Heart right ventricle (tissue), 16 donors: ENCODE measurements at regions of chr14 and their contacts with region 1.

Region 1: DNA sequence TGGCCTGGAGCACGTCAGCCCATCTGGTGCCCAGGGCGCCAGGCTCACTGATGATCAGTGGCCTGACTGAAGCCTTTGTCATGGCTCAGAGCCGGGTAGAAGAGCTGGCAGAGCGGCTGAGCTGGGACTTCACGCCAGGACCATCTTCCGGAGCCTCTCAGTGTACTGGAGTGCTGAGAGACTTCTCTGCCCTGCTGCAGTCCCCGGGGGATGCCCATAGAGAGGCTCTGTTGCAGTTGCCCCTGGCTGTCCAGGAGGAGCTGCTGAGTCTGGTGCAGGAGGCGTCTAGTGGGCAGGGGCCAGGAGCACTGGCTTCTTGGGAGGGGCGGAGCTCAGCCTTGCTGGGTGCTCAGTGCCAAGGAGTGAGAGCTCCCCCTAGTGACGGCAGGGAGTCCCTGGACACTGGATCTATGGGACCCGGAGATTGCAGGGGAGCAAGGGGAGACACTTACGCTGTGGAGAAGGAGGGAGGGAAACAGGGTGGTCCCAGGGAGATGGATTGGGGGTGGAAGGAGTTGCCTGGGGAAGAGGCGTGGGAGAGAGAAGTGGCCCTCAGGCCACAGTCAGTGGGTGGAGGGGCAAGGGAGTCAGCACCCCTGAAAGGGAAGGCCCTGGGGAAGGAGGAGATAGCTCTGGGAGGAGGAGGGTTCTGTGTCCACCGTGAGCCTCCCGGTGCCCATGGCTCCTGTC is 2.0 kb downstream of the KHNYN start:
- DNase-seq: peak; percentile 91 to 92
- ATAC-seq: peak; percentile 56 to 83 (median 74)
- H3K4me3 ChIP-seq: peak overlapping the region in 9 of 10 donors; percentile 74 to 91 (median 79)
- H3K27ac ChIP-seq: peak overlapping the region in 9 of 10 donors; percentile 91 to 99 (median 97)
- H3K4me1 ChIP-seq: peaks cover 12 to 56% (median 43%) of the 10 kb centered on the region in 9 donors
- H3K27me3 ChIP-seq: no peaks in the 10 kb centered on the region
- CTCF ChIP-seq: peak; percentile 90 to 96 (median 92)

Region 2: DNA sequence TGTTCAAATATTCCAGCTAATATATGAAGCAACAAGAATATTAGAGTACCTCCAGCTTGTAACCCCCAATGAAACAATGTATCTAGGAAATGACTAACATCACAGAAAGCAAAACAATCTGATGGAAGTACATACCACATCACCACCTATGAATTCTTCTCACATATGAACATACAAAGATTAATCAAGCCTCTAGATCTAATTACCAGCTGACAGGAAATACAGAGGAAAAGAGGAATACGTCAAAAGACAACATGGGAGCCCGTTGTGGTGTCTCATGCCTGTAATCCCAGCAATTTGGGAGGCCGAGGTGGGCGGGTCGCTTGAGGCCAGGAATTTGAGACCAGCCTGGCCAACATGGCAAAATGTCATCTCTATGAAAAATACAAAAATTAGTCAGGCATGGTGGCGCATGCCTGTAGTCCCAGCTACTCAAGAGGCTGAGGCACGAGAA is 207.1 kb before region 1 on chr14:
- intact Hi-C with region 1: loop called in 1 of 10 experiments (anchors 5 kb)
- DNase-seq: no peak
- ATAC-seq: peak in 4 of 8 donors; percentile 23 to 77 (median 71)
- H3K4me3 ChIP-seq: no peak overlapping the region
- H3K27ac ChIP-seq: peak overlapping the region in 6 of 10 donors; percentile 17 to 67 (median 44)
- H3K4me1 ChIP-seq: peaks cover 0 to 18% (median 4%) of the 10 kb centered on the region in 9 donors
- H3K27me3 ChIP-seq: no peaks in the 10 kb centered on the region
- CTCF ChIP-seq: no peak

Region 3: DNA sequence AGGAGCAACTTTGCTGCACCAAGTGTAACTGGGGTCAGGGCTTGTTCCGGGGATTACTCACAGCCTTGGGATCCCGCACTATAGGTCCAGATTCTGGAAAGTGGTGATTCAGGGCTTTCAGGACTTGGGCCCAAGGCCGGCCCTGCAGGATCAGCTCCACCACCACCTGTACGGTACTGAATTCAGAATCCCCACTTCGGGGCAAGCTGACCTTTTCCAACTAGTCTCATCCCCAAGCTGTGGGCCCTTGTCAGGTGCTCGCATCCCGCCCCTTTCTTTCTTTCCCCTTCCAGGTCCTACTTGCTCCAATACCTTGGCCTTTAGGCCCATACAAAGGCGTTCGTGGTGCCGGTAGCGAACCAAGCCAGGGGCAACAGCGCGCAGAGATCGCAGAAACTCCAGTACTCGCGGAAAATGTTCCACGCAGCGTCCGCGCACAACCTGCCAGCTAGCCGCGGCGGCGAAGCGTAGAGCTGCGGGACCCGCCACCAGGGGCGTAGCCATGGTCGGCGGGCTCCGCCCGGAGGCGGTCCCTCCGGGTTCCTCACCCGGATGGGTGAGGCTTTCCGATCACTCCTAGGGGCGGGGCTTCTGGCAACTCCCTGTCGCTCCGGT is 189.8 kb before region 1 on chr14:
- intact Hi-C with region 1: loop called in 5 of 10 experiments (anchors 10 kb)
- DNase-seq: peak; percentile 93
- ATAC-seq: peak; percentile 91 to 96 (median 94)
- H3K4me3 ChIP-seq: peak overlapping the region; percentile 59 to 90 (median 74)
- H3K27ac ChIP-seq: peak overlapping the region; percentile 97 to 99 (median 98)
- H3K4me1 ChIP-seq: peaks cover 10 to 60% (median 48%) of the 10 kb centered on the region in 9 donors
- H3K27me3 ChIP-seq: no peaks in the 10 kb centered on the region
- CTCF ChIP-seq: peak; percentile 35 to 75 (median 69)

Region 4: GRCh38 chr14:24332268-24332993 is 99.3 kb before region 1 on chr14:
- intact Hi-C with region 1: loop called (anchors 1 to 5 kb)
- DNase-seq: peak; percentile 43 to 68
- ATAC-seq: peak in 7 of 8 donors; percentile 31 to 56 (median 51)
- H3K4me3 ChIP-seq: peak overlapping the region in 9 of 10 donors; percentile 14 to 88 (median 70)
- H3K27ac ChIP-seq: peak overlapping the region in 3 of 10 donors; percentile 15 to 97 (median 90)
- H3K4me1 ChIP-seq: peaks cover 6 to 92% (median 37%) of the 10 kb centered on the region in 9 donors
- H3K27me3 ChIP-seq: peaks cover 0 to 35% (median 24%) of the 10 kb centered on the region in 7 donors
- CTCF ChIP-seq: peak; percentile 43 to 75 (median 68)

Region 5: DNA sequence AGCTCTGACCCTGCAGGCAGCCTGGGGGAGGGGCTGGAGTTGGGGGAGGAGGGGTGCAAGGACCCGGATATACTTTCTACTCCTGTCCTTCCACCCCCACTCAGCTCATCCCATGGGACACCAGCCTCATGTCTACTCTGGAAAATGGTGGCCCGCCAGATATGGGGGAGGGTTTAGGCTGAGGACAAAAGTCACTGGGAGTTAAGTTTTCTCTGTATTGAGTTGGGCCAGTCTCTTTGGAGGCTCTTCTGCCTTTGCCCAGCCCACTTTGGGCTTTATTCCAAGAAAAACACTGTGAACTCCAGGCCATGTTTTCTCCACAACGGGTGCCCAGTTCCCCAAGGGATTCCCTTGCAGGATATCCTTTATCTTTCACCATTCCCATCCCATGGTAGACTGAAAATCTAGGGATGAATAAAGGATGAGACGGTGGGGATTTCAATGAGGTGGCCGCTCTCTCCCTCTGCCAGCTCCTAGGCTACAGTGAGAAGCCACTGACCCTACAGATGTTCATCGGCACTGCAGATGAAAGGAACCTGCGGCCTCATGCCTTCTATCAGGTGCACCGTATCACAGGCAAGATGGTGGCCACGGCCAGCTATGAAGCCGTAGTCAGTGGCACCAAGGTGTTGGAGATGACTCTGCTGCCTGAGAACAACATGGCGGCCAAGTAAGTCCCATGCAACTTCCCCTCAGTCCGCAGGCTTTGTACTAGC is 58.9 kb before region 1 on chr14:
- intact Hi-C with region 1: loop called in 2 of 10 experiments (anchors 1 to 10 kb)
- DNase-seq: peak; percentile 71 to 79
- ATAC-seq: peak; percentile 8 to 43 (median 17)
- H3K4me3 ChIP-seq: no peak overlapping the region
- H3K27ac ChIP-seq: peak overlapping the region in 6 of 10 donors; percentile 34 to 68 (median 44)
- H3K4me1 ChIP-seq: peaks cover 0 to 60% (median 7%) of the 10 kb centered on the region in 9 donors
- H3K27me3 ChIP-seq: peaks cover 0 to 20% (median 3%) of the 10 kb centered on the region in 7 donors
- CTCF ChIP-seq: no peak